ENCODE measurements at regions of chr2 and their contacts with region 1.

Region 1: GRCh38 chr2:224284134-224284946 is 117.6 kb downstream of the FAM124B start:
- DNase-seq: peak; percentile 50

Region 2: DNA sequence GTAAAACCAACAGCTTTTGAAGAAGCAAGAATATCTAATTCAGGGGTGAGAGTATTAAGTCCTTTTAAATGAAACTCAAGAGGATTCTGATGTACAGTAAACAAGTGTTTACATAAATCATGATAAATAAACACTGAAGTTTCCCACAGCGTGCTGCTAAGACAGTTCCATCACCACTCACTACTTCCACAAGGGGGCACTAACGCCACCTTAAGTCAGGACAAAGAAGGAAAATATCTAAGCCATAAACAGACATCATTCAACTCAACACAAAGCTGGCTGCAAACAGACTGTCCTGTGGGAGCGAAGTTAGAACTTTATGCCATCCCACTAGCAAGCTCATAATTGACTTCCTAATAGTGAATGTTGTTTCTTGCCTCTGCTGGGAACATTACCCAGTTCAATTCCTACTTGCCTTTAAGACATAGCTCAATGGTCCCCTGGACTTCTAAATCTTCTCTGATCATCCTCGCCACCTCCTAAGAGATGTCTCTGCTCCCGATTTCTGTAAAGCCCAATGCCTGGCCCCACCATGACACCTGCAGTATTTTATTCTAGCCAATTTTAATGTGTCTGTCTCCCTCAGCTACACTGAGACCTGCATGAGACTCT is 290.6 kb before region 1 on chr2:
- in situ Hi-C with region 1: loop called (anchors 25 kb)
- DNase-seq: peak; percentile 78

Region 3: GRCh38 chr2:224145751-224146355 is 138.5 kb before region 1 on chr2:
- in situ Hi-C with region 1: no loop called
- DNase-seq: peak; percentile 8